Heart left ventricle (tissue), 16 donors: ENCODE measurements at regions of chr1 and their contacts with region 1.

Region 1: GRCh38 chr1:85502625-85503083 is 37.7 kb upstream of the DDAH1 start:
- DNase-seq: peak; percentile 38 to 56 (median 45)
- ATAC-seq: peak; percentile 42 to 90 (median 84)
- H3K4me3 ChIP-seq: no peak overlapping the region
- H3K27ac ChIP-seq: peak overlapping the region in 1 of 12 donors; percentile 43
- H3K4me1 ChIP-seq: peaks cover 0 to 8% (median 3%) of the 10 kb centered on the region in 12 donors
- H3K27me3 ChIP-seq: no peaks in the 10 kb centered on the region
- CTCF ChIP-seq: peak; percentile 39 to 71 (median 56)
- POLR2A ChIP-seq: no peak

Region 2: DNA sequence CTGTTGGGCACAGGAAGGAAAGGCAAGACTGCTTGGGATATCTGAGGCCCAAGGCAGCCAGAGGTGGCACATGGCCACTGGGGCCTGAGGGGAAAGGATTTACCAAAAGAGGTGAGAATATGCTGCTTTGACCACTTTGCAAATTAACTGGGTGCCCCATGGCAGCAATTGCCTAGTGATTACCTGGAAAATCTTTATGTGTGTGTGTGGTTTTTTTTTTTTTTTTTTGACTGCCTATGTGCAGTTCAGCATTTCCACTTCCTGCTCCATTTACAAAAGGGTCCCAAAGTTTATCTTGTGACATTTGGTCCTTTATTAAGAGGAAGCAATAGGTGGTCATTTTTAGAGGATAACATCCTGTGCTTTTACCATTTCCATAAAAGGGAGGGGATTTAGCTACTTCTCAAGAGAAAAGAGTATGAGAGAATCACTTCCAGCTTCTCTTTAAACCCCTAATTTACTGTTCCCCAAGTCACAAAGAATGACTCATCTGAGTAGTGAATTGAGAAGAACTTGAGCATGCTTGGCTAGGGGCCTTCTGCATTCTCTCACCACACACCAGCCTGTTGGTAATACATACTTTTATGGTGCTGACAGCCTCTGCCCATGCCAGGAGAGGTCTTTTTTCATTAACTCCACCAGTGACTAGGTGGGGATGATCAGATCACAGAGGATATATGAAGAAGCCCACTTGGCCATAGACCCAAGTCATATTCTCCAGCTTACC is 354.0 kb before region 1 on chr1:
- intact Hi-C with region 1: no loop called
- DNase-seq: peak in 3 of 5 donors; percentile 40 to 50 (median 43)
- ATAC-seq: peak; percentile 71 to 84 (median 80)
- H3K4me3 ChIP-seq: no peak overlapping the region
- H3K27ac ChIP-seq: peak overlapping the region in 5 of 12 donors; percentile 27 to 59 (median 41)
- H3K4me1 ChIP-seq: peaks cover 0 to 37% (median 3%) of the 10 kb centered on the region in 12 donors
- H3K27me3 ChIP-seq: no peaks in the 10 kb centered on the region
- CTCF ChIP-seq: no peak
- POLR2A ChIP-seq: no peak

Region 3: GRCh38 chr1:85313888-85314696 is 188.6 kb before region 1 on chr1:
- intact Hi-C with region 1: loop called in 8 of 10 experiments (anchors 2 to 5 kb)
- DNase-seq: peak in 4 of 5 donors; percentile 44 to 51 (median 48)
- ATAC-seq: peak; percentile 91 to 94 (median 92)
- H3K4me3 ChIP-seq: no peak overlapping the region
- H3K27ac ChIP-seq: peak overlapping the region; percentile 72 to 96 (median 84)
- H3K4me1 ChIP-seq: peaks cover 0 to 47% (median 24%) of the 10 kb centered on the region in 12 donors
- H3K27me3 ChIP-seq: no peaks in the 10 kb centered on the region
- CTCF ChIP-seq: no peak
- POLR2A ChIP-seq: no peak

Region 4: DNA sequence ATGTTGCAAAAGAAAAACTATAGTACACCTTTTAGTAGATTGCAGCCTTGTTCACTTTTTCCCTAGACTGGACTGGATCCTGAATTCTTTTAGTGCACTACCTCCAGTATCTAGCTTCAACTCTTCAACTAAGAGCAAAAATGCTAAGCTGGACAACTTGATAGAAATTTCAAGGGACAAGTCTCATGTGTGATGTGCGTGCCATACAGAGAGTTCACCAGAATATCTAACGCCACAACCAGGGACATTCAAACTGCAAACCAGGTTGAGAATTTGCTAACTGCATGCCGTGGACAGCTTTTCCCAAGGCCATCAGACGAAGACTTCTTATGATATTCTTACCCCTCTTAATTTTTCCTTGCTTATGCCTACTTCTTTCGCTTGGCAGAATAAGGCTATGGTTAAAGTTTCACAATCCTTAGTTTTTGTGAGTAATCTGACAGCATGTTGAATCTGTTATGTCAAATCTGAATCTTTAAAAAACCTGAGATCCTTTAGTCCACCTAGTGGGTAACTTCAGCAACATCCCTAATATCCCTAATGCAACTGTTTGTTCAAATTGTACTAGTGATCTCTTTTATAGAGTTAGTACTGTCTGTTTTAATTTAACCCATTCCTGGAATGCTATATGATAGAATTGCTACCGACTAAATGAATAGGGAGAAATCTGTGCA is 104.1 kb before region 1 on chr1:
- intact Hi-C with region 1: loop called in 2 of 10 experiments (anchors 5 kb)
- DNase-seq: no peak
- ATAC-seq: peak; percentile 13 to 66 (median 42)
- H3K4me3 ChIP-seq: no peak overlapping the region
- H3K27ac ChIP-seq: peak overlapping the region in 1 of 12 donors; percentile 25
- H3K4me1 ChIP-seq: peaks cover 0 to 26% (median 0%) of the 10 kb centered on the region in 12 donors
- H3K27me3 ChIP-seq: no peaks in the 10 kb centered on the region
- CTCF ChIP-seq: peak; percentile 11 to 52 (median 32)
- POLR2A ChIP-seq: no peak

Region 5: DNA sequence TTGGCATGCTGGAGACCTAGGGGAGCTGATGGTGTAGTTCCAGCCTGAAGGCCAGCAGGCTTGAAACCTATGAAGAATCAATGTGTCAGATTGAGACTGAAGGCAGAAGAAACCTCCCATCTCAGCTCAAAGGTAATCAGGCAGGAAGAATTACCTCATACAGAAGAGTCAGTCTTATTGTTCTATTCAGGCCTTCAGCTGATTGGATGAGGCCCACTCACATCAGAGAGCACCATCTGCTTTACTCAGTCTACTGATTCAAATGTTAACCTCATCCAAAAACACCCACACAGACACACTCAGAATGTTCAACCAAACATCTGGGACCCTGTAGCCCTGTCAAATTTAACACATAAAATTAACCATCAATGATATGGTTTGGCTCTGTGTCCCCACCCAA is 64.2 kb after region 1 on chr1:
- intact Hi-C with region 1: no loop called
- DNase-seq: no peak
- ATAC-seq: peak in 2 of 4 donors; percentile 54 to 73
- H3K4me3 ChIP-seq: no peak overlapping the region
- H3K27ac ChIP-seq: no peak overlapping the region
- H3K4me1 ChIP-seq: peaks cover 0 to 26% (median 9%) of the 10 kb centered on the region in 12 donors
- H3K27me3 ChIP-seq: no peaks in the 10 kb centered on the region
- CTCF ChIP-seq: no peak
- POLR2A ChIP-seq: no peak

Region 6: DNA sequence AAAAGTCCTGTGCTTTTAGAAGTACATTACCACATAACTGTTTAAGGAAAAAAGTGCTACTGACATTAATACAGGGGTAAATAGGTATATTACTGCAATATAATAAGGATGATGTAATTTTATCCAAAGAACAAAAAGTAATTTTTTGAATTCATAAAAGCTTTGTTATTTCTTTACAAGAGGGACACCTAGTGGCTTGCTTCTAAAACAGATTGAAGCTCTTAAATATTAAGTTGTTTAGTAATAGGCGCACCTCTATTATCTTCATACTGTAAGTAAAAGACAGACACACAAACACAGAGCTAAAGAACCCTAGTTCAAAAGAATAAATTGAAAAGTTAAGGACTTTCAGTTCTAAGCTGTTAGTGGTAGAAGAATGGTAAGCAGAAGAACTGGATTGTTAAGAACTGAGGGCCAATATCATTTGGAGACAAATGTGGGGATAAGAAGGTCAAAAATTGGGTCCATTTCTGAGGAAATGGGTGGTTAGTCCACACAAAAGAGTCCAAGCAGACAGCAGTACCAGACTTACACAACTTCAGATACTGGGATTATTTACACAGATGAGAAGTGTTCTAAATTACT is 190.2 kb after region 1 on chr1:
- intact Hi-C with region 1: loop called in 6 of 10 experiments (anchors 5 to 10 kb)
- DNase-seq: no peak
- ATAC-seq: peak in 2 of 4 donors; percentile 35 to 47
- H3K4me3 ChIP-seq: no peak overlapping the region
- H3K27ac ChIP-seq: peak overlapping the region in 3 of 12 donors; percentile 4 to 10 (median 9)
- H3K4me1 ChIP-seq: peaks cover 0 to 19% (median 7%) of the 10 kb centered on the region in 12 donors
- H3K27me3 ChIP-seq: no peaks in the 10 kb centered on the region
- CTCF ChIP-seq: peak; percentile 25 to 69 (median 52)
- POLR2A ChIP-seq: no peak